Transverse colon (tissue), 4 donors: ENCODE measurements at regions of chr4 and their contacts with region 1.

Region 1: GRCh38 chr4:131566026-131566425 is 1583.1 kb upstream of the PCDH10 start:
- DNase-seq: no peak
- H3K4me3 ChIP-seq: no peak overlapping the region
- H3K27ac ChIP-seq: no peak overlapping the region
- H3K4me1 ChIP-seq: no peaks in the 10 kb centered on the region
- H3K27me3 ChIP-seq: no peaks in the 10 kb centered on the region
- CTCF ChIP-seq: no peak
- EP300 ChIP-seq: no peak
- POLR2A ChIP-seq: no peak

Region 2: GRCh38 chr4:131595140-131595539 is 29.1 kb after region 1 on chr4:
- in situ Hi-C with region 1: no loop called
- intact Hi-C with region 1: loop called (anchors 1 kb)
- DNase-seq: no peak
- H3K4me3 ChIP-seq: no peak overlapping the region
- H3K27ac ChIP-seq: no peak overlapping the region
- H3K4me1 ChIP-seq: no peaks in the 10 kb centered on the region
- H3K27me3 ChIP-seq: no peaks in the 10 kb centered on the region
- CTCF ChIP-seq: no peak
- EP300 ChIP-seq: no peak
- POLR2A ChIP-seq: no peak

Region 3: DNA sequence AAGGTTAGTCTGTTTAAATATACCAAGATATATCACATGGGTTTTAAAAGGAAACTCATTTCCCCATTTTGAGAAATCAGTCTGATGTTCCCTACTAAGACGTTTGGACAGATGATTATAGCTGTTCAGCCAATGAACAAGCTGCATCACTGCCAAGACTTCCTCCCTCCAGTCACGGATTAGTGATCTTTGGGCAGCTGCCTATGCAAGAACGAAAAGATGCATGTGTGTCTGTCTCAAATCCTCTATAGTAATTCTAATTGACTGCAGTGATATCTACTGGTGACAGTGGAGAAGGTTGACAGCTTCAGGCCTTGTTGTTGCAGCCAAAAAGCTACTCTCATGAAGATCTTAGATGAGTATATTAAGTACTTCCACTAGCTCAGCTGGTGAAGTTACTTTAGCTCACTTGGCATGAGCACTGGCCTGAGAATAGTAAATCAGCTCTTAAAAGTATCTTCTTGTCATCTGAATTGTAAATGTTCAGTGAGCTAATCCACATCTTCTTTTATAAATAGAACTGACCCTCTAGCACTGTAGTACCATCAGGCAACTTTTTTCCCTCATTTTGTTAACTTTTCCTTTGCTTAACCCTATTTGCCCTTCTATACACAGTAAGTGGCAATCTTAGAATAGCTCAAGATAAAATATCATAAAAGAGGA is 1448.6 kb after region 1 on chr4:
- in situ Hi-C with region 1: no loop called
- intact Hi-C with region 1: no loop called
- DNase-seq: no peak
- H3K4me3 ChIP-seq: no peak overlapping the region
- H3K27ac ChIP-seq: no peak overlapping the region
- H3K4me1 ChIP-seq: no peaks in the 10 kb centered on the region
- H3K27me3 ChIP-seq: no peaks in the 10 kb centered on the region
- CTCF ChIP-seq: no peak
- EP300 ChIP-seq: no peak
- POLR2A ChIP-seq: no peak